Astrocyte of the cerebellum (primary cell): ENCODE measurements at regions of chr15 and their contacts with region 1.

Region 1: DNA sequence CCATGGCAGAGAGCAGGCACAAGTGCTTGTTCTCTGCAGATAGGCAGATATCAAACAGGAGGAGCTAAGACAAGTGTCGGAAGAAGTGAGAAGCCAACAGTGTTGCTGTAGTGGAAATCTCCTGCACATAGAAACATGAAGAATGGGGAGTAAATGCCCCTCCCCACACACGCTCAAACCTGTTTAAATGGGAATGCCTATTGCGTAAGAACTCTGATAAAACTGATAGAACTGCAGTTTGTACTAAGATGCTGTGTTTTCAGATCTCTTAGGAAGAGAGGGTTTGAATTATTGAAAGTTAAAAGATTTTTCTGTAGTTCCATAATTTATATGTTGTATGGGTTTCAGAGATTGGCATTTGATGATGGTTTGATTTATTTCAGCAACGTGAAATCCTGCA is 19.6 kb downstream of the EIF2AK4 start:
- DNase-seq: no peak
- H3K4me3 ChIP-seq: no peak overlapping the region
- CTCF ChIP-seq: no peak

Region 2: DNA sequence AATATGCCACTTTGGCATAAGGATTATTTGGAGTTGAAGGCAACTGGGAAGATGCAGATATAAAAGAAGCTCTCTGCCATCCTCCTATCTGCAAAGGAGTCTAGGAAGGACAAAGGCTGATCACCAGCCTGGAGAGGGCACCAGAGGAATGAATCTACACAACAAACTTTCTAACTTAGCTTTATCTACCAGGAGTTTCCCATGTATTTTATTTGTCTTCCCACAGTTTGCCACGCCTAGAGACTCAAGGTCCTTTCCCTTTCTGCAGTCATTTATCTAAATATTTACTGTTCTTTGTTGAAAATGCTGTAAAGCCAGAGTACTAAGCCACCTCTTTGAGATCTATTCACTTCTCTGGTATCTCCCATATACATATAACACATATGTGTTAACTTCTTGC is 65.7 kb before region 1 on chr15:
- in situ Hi-C with region 1: loop called (anchors 5 kb)
- DNase-seq: peak; percentile 16
- H3K4me3 ChIP-seq: no peak overlapping the region
- CTCF ChIP-seq: peak; percentile 41

Region 3: GRCh38 chr15:40047413-40048210 is 94.1 kb after region 1 on chr15:
- in situ Hi-C with region 1: no loop called
- DNase-seq: no peak
- H3K4me3 ChIP-seq: no peak overlapping the region
- CTCF ChIP-seq: no peak